Sigmoid colon (tissue), 7 donors: ENCODE measurements at regions of chr2 and their contacts with region 1.

Region 1: DNA sequence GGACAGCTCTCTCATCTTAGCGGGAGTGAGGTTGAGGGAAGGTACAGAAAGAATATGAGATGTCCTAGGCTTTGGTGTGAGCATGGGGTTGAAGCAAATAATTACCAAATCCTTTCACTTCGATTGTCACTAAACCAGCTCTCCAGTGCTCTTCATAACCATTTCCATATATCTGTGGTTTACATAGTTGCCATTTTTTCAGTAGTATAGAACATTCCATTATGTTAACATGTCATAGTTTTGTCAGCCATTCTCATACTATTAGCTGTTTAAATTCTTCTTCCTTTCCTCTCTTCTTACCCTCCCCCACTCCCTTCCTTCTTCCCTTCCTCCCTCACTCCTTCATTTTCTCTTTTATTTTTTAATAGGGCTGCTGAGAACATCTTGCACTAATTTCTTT is 205.9 kb downstream of the BABAM2 start:
- DNase-seq: no peak
- H3K4me3 ChIP-seq: no peak overlapping the region
- H3K27ac ChIP-seq: no peak overlapping the region
- H3K4me1 ChIP-seq: peaks cover 0 to 4% (median 0%) of the 10 kb centered on the region in 4 donors
- H3K27me3 ChIP-seq: no peaks in the 10 kb centered on the region
- CTCF ChIP-seq: no peak
- EP300 ChIP-seq: no peak
- POLR2A ChIP-seq: no peak

Region 2: DNA sequence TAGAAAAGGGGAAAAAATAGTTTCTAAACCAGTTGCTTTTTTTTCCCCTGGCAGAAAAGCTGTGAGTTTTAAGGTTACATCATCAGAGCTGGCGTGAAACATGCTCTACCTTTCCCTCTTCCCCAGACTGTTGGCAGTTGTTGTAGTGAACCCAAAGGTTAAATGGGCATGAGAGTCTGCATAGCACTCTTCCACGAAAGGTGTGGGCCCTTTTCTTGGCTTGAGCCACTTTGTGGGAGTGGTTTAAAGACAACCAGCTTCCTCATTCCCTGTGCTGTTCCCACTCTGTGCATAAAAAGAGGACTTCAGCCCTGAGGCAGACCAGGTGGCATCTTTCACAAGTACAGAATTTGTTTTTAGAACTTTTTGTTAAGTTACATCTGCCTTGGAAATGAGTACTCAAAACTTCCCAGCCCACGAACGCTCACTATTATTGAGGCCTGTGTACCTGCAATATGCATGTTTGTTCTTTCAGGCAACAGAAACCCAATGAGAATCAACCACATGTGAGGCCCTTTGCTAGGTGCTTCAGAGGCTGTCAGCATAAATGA is 37.9 kb after region 1 on chr2:
- intact Hi-C with region 1: loop called (anchors 5 kb)
- DNase-seq: peak; percentile 70
- H3K4me3 ChIP-seq: no peak overlapping the region
- H3K27ac ChIP-seq: peak overlapping the region; percentile 15 to 49 (median 36)
- H3K4me1 ChIP-seq: peaks cover 0 to 38% (median 24%) of the 10 kb centered on the region in 4 donors
- H3K27me3 ChIP-seq: no peaks in the 10 kb centered on the region
- CTCF ChIP-seq: no peak
- EP300 ChIP-seq: no peak
- POLR2A ChIP-seq: no peak